ENCODE measurements at regions of chrX and their contacts with region 1.

Region 1: DNA sequence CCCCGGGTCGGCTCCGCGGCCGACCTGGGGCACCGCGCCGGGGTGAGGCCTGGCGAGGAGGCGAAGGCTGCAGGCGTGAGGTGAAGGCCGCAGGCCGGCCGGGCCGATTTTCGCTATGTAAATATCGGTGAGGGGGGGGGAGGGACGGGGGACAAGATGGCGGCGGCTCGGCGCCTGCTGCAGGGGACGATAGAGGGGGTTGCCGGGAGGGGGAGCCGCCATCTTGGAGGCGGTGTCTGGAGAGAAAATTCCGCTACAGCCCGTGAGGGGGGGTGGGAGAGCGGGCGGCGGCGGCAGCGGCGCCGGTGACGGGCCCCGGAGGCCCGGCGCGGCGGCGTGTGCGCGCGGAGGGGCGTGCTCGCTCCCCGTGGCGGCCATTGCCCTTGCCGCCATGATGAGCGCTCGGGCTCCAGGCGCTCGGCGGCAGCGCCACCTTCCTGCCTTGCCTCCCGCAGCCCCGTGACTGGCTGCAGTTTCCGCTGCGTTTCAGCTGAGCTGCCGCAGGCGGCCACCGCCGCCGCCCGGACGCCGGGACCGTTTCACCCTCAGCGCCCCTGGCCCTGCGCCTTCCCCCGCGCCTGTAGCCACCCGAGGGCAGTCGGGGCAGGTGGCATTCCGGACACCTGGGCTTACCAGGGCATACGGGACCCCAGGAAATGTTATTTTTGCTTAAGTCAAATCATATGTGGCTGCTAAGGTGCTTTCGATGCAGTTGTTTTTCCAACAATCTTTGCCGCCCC is 692 bp downstream of the ZFX start:
- DNase-seq: peak; percentile 76
- H3K4me3 Mint-ChIP-seq: peak overlapping the region; percentile 95
- H3K27ac Mint-ChIP-seq: peak overlapping the region; percentile 92
- H3K4me1 Mint-ChIP-seq: peaks cover 64% of the 10 kb centered on the region
- H3K27me3 Mint-ChIP-seq: no peaks in the 10 kb centered on the region

Region 2: GRCh38 chrX:23732704-23733103 is 417.5 kb before region 1 on chrX:
- intact Hi-C with region 1: loop called (anchors 10 kb)
- DNase-seq: no peak
- H3K4me3 Mint-ChIP-seq: peak overlapping the region; percentile 30
- H3K27ac Mint-ChIP-seq: peak overlapping the region; percentile 83
- H3K4me1 Mint-ChIP-seq: peaks cover 29% of the 10 kb centered on the region
- H3K27me3 Mint-ChIP-seq: no peaks in the 10 kb centered on the region

Region 3: DNA sequence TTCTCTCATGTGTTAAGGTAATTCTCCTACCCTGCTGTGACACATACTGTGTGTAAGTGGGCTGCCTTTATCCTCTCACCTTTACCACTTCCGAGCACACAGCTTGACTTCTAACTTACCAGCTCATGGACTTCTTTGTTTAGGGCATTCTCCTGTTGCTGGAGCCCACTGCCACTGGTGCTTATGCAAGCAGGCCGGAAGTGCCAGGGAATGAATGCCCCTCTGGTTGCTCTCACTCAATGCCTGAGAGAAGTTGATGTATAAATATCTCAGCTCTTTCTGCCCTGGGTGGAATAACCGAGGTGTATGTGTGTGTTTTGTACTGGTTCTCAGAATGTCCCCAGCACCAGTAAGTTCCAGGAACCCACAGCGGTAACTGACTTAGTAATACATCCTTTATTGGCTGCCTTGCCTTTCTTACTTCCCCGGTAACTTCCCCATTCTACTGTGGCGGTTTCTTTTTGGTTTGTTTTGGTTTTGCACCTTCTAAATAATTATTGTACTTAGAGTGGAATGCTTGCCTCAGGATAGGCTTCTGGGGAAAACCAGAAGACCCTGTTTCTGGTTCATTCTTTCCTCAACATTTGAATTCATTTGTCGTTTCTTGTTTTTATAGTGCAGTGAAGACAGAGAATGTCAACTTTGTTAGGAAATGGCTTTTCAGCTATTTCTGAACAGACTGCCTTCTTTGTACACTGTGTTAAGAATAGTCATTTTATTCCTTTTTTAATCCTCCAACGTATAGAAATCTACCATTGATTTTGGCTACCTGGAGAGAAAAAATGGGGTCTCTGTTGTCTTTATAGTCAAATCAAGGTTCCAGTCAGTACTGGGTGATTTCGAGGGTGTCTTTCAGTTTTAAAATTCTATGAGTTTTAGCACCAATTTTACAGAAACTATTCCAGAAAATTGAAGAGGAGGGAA is 197.0 kb before region 1 on chrX:
- intact Hi-C with region 1: loop called (anchors 5 kb)
- DNase-seq: peak; percentile 45
- H3K4me3 Mint-ChIP-seq: peak overlapping the region; percentile 82
- H3K27ac Mint-ChIP-seq: peak overlapping the region; percentile 95
- H3K4me1 Mint-ChIP-seq: peaks cover 28% of the 10 kb centered on the region
- H3K27me3 Mint-ChIP-seq: no peaks in the 10 kb centered on the region

Region 4: GRCh38 chrX:24081661-24082264 is 68.5 kb before region 1 on chrX:
- intact Hi-C with region 1: loop called (anchors 2 kb)
- DNase-seq: peak; percentile 21
- H3K4me3 Mint-ChIP-seq: peak overlapping the region; percentile 11
- H3K27ac Mint-ChIP-seq: no peak overlapping the region
- H3K4me1 Mint-ChIP-seq: peaks cover 13% of the 10 kb centered on the region
- H3K27me3 Mint-ChIP-seq: no peaks in the 10 kb centered on the region

Region 5: GRCh38 chrX:24169211-24169610 is 19.0 kb after region 1 on chrX:
- intact Hi-C with region 1: loop called (anchors 2 kb)
- DNase-seq: no peak
- H3K4me3 Mint-ChIP-seq: peak overlapping the region; percentile 32
- H3K27ac Mint-ChIP-seq: peak overlapping the region; percentile 82
- H3K4me1 Mint-ChIP-seq: peaks cover 40% of the 10 kb centered on the region
- H3K27me3 Mint-ChIP-seq: no peaks in the 10 kb centered on the region

Region 6: DNA sequence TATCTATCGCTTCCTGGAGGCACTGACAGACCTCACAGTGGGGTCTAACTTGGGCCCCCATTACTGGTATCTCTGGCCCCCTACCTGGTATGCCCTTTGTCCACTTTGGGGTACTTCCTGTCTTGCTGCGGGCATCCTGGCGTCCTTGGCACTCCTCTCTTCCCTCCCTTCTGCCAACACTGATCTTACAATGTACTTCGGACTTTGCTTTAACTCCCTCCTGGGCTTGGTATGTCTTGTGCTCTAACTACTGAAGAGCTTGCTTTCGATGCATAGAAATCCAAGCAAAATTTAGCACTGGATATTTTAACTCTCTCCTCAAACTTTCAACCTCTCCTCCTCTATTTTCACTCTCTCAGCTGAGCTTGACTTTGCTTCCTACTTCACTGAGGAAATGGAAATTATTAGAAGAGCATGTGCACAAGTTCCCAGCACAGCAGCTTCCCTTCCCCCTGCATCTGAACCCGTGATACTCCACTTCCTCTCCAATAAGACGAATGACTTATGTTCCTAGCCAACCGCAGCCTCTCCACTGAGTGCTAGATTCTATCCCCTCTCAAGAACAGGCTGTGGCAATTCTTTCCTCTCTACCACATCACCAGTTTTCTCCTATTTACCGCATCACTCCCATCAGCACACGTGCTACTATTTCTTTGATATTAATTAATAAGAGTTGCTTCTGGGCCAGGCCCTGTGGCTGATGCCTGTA is 110.8 kb after region 1 on chrX:
- intact Hi-C with region 1: no loop called
- DNase-seq: peak; percentile 7
- H3K4me3 Mint-ChIP-seq: peak overlapping the region; percentile 35
- H3K27ac Mint-ChIP-seq: peak overlapping the region; percentile 78
- H3K4me1 Mint-ChIP-seq: peaks cover 31% of the 10 kb centered on the region
- H3K27me3 Mint-ChIP-seq: no peaks in the 10 kb centered on the region

Region 7: GRCh38 chrX:25295466-25295865 is 1145.2 kb after region 1 on chrX:
- intact Hi-C with region 1: no loop called
- DNase-seq: no peak
- H3K4me3 Mint-ChIP-seq: no peak overlapping the region
- H3K27ac Mint-ChIP-seq: no peak overlapping the region
- H3K4me1 Mint-ChIP-seq: no peaks in the 10 kb centered on the region
- H3K27me3 Mint-ChIP-seq: no peaks in the 10 kb centered on the region

Measured in activated T-helper 1 cell treated with anti-CD3 and anti-CD28 coated beads, Interleukin-12 subunit alpha, Interleukin-12 subunit beta, Interleukin-2, Interleukin-4 antibody, amounts not matched to agents 30 ng/mL and 10 ng/mL and 1 ng/mL, durations not matched to agents 14 hours and 24 hours and 36 hours (primary cell).